Naive thymus-derived CD4-positive, alpha-beta T cell (primary cell): ENCODE measurements at regions of chr12 and their contacts with region 1.

Region 1: DNA sequence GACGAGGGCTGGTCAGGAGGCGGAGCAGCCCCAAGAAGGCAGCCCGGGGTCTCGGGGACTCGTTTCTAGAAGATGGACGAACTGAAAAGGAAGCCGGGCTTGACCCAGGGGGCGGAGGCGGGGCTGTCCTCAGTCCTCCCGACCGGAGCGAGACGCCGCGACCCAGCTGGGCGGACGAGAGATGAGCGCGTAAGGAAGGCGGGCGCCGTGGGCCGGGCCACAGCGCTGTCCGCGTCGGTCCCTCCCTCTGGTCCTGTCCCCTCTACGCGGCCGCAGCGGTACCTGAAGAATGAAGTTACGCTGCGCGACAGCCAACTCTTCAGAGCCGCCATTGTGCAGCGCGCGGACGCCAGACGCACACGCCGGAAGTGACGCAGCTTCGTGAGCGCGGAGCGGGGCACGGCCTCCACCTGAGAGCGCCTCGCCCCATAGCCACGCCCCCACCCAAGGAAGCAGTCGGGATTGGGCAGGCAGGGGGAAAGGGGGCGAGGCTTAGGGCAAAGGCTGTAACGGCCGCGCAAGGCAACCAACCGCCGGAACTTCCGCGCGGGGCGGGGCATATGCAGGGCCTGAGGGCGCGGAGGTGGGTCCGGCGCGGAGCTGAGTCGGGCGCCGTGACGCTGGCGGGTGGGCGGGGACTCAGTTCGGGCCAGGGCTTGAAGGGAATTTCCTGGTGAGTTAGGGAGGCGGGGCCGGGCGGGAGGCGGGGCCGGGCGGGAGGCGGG is at the start of gene DIABLO:
- DNase-seq: peak; percentile 97 to 100 (median 100)
- ATAC-seq: peak; percentile 96
- H3K4me3 ChIP-seq: peak within 1 kb of the TSS; percentile 90
- H3K4me3 Mint-ChIP-seq: peak within 1 kb of the TSS; percentile 75 to 95 (median 90)
- H3K27ac ChIP-seq: peak within 1 kb of the TSS; percentile 99
- H3K27ac Mint-ChIP-seq: peak within 1 kb of the TSS; percentile 76 to 96 (median 93)
- H3K4me1 ChIP-seq: peaks cover 24 to 34% of the 10 kb centered on the region in 2 donors
- H3K4me1 Mint-ChIP-seq: peaks cover 23 to 53% (median 47%) of the 10 kb centered on the region in 7 donors
- H3K27me3 ChIP-seq: no peaks in the 10 kb centered on the region
- H3K27me3 Mint-ChIP-seq: no peaks in the 10 kb centered on the region
- total RNA-seq, gene DIABLO: 41.3 to 94.1 (median 50.1) TPM

Region 2: GRCh38 chr12:121399391-121400331 is 826.2 kb before region 1 on chr12 and contains the start of gene RNF34:
- CTCF ChIA-PET with region 1: no interaction called
- POLR2A ChIA-PET with region 1: interaction called, 5 read pairs
- intact Hi-C with region 1: loop called in 1 of 2 experiments (anchors 2 kb)
- DNase-seq: peak; percentile 88 to 98 (median 97)
- ATAC-seq: peak; percentile 96
- H3K4me3 ChIP-seq: peak within 1 kb of the TSS; percentile 93
- H3K4me3 Mint-ChIP-seq: peak within 1 kb of the TSS; percentile 89 to 99 (median 94)
- H3K27ac ChIP-seq: peak within 1 kb of the TSS; percentile 91
- H3K27ac Mint-ChIP-seq: peak within 1 kb of the TSS; percentile 91 to 97 (median 94)
- H3K4me1 ChIP-seq: peaks cover 20 to 26% of the 10 kb centered on the region in 2 donors
- H3K4me1 Mint-ChIP-seq: peaks cover 29 to 52% (median 39%) of the 10 kb centered on the region in 7 donors
- H3K27me3 ChIP-seq: no peaks in the 10 kb centered on the region
- H3K27me3 Mint-ChIP-seq: no peaks in the 10 kb centered on the region
- total RNA-seq, gene RNF34: 61.1 to 98.4 (median 81.7) TPM

Region 3: DNA sequence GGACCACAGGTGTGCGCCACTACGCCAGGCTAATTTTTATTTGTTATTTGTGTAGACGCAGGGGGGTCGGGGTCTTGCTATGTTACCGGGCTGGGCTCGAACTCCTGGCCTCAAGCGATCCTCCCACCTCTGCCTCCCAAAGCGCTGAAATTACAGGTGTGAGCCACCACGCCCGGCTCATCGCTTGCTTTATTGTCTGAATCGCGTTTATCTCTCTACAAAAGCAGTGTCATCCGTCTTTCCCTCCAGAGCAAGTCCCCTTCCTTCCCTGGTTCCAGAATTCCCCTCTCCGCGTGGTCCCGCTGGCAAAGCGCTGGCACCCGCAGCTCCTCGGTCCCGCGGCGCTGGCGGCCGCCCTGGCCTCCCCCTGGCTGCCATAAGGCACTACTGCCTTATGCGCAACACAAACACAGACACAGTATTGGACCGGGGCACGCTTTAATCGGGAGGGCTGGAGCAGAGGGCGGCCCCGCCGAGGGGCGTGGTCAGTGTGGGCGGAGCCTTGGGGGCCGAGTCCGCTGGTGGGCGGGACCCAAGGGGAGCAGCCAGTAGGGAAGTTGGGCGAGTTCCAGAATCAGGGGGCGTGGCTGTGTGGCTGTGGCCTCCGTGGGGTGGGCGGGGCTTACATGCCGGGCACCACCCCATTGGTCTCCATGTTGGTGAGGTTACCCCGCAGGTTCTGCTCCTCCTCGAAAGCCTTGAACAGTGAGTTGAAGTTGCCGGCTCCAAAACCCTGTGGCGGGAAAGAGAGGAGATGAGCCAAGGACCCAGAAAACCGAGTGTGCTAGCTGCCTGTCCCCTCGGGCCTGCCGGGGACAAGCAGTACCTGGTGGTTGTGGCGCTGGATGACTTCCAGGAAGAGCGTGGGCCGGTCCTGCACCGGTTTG is 386.5 kb before region 1 on chr12:
- CTCF ChIA-PET with region 1: no interaction called
- POLR2A ChIA-PET with region 1: no interaction called
- intact Hi-C with region 1: loop called (anchors 1 kb)
- DNase-seq: peak; percentile 98 to 100 (median 99)
- ATAC-seq: peak; percentile 100
- H3K4me3 ChIP-seq: peak overlapping the region; percentile 91
- H3K4me3 Mint-ChIP-seq: peak overlapping the region; percentile 96 to 100 (median 98)
- H3K27ac ChIP-seq: peak overlapping the region; percentile 58
- H3K27ac Mint-ChIP-seq: peak overlapping the region; percentile 87 to 96 (median 92)
- H3K4me1 ChIP-seq: peaks cover 8 to 13% of the 10 kb centered on the region in 2 donors
- H3K4me1 Mint-ChIP-seq: peaks cover 12 to 27% (median 18%) of the 10 kb centered on the region in 7 donors
- H3K27me3 ChIP-seq: no peaks in the 10 kb centered on the region
- H3K27me3 Mint-ChIP-seq: no peaks in the 10 kb centered on the region

Region 4: DNA sequence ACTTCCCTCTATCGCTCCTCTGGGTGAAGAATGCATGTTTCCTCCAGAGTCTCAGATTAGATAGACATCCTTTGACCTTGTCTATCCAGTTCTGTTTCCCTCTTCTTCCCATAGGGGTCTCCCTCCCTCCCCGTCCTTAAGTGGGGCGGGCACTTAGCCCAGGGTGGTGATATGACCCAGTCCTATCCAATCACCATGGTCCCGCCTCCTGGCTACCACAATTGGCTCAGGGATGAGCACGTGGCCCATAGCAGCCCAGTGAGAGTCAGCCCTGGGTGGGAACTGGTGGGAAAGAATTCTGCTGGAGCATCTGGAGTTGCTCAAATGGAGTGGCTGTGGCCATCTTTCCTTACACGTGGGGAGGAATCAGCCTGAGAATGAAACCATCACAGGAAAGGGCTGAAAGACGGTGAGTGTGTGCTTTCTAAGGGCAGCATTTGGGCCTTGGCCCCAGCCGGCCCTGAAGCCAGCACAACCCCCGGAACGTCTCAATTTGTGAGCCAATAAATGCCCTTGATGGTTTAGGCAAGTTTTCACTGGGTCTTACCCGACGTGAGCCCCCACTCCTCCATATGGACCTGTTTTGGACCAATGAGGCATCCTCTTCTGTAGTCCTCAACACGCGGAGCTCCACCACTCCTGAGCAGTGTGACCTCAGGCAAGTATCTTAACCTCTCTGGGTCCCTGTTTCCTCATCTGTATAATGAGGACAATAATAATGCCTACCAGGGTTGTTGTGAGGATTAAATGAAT is 161.6 kb before region 1 on chr12:
- CTCF ChIA-PET with region 1: no interaction called
- POLR2A ChIA-PET with region 1: no interaction called
- intact Hi-C with region 1: no loop called
- DNase-seq: peak in 4 of 9 donors; percentile 13 to 37 (median 29)
- ATAC-seq: peak; percentile 80
- H3K4me3 ChIP-seq: no peak overlapping the region
- H3K4me3 Mint-ChIP-seq: no peak overlapping the region
- H3K27ac ChIP-seq: no peak overlapping the region
- H3K27ac Mint-ChIP-seq: peak overlapping the region in 2 of 9 donors; percentile 18 to 83
- H3K4me1 ChIP-seq: peaks cover 11 to 12% of the 10 kb centered on the region in 2 donors
- H3K4me1 Mint-ChIP-seq: peaks cover 19 to 29% (median 24%) of the 10 kb centered on the region in 7 donors
- H3K27me3 ChIP-seq: no peaks in the 10 kb centered on the region
- H3K27me3 Mint-ChIP-seq: peaks cover 0 to 1% (median 0%) of the 10 kb centered on the region in 5 donors

Region 5: DNA sequence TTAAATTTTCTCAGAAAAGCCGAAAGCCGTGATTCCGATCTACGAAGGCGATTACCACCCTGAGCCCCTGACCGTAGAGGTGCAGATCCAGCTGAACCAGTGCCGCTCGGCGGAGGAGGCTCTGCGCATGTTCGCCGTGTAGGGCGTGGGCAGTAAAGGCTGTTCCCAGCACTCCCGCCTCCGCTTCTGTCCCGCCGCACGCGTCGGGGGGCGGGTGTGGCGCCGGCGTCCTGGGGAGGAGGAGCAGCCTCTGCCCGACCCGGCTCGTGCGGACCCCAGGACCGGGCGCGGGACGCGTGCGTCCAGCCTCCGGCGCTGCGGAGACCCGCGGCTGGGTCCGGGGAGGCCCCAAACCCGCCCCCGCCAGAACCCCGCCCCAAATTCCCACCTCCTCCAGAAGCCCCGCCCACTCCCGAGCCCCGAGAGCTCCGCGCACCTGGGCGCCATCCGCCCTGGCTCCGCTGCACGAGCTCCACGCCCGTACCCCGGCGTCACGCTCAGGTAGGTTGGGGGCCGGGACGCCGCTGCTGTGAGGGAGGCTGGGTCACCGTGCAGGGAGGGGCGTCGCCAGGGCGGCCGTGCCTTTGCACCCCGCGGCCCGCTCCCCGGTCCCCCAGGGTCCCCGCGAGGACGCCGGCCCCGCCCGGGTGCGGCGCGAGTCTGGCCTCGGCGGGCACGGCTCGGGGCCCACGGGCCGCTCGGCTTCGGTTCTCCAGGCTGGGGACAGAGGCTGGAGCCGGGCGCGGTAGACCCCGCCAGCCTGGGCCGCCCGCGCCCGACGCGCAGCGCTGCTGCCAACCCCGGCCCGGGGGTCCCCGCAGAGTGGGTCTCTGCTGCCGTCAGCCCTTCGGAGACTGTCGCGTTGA is 22.3 kb before region 1 on chr12 and contains the start of gene B3GNT4:
- CTCF ChIA-PET with region 1: no interaction called
- POLR2A ChIA-PET with region 1: interaction called, 6 read pairs
- intact Hi-C with region 1: loop called in 1 of 2 experiments (anchors 1 kb)
- DNase-seq: peak; percentile 50 to 75 (median 67)
- ATAC-seq: peak; percentile 79
- H3K4me3 ChIP-seq: peak within 1 kb of the TSS; percentile 68
- H3K4me3 Mint-ChIP-seq: peak within 1 kb of the TSS; percentile 79 to 87 (median 82)
- H3K27ac ChIP-seq: no peak within 1 kb of the TSS
- H3K27ac Mint-ChIP-seq: peak within 1 kb of the TSS in 5 of 9 donors; percentile 44 to 77 (median 46)
- H3K4me1 ChIP-seq: peaks cover 6 to 10% of the 10 kb centered on the region in 2 donors
- H3K4me1 Mint-ChIP-seq: peaks cover 5 to 17% (median 14%) of the 10 kb centered on the region in 7 donors
- H3K27me3 ChIP-seq: peaks cover 0 to 3% of the 10 kb centered on the region in 2 donors
- H3K27me3 Mint-ChIP-seq: peaks cover 0 to 35% (median 0%) of the 10 kb centered on the region in 5 donors
- total RNA-seq, gene B3GNT4: 0.54 to 1.1 (median 0.70) TPM in 3 of 5 experiments, not detected in the others

Region 6: DNA sequence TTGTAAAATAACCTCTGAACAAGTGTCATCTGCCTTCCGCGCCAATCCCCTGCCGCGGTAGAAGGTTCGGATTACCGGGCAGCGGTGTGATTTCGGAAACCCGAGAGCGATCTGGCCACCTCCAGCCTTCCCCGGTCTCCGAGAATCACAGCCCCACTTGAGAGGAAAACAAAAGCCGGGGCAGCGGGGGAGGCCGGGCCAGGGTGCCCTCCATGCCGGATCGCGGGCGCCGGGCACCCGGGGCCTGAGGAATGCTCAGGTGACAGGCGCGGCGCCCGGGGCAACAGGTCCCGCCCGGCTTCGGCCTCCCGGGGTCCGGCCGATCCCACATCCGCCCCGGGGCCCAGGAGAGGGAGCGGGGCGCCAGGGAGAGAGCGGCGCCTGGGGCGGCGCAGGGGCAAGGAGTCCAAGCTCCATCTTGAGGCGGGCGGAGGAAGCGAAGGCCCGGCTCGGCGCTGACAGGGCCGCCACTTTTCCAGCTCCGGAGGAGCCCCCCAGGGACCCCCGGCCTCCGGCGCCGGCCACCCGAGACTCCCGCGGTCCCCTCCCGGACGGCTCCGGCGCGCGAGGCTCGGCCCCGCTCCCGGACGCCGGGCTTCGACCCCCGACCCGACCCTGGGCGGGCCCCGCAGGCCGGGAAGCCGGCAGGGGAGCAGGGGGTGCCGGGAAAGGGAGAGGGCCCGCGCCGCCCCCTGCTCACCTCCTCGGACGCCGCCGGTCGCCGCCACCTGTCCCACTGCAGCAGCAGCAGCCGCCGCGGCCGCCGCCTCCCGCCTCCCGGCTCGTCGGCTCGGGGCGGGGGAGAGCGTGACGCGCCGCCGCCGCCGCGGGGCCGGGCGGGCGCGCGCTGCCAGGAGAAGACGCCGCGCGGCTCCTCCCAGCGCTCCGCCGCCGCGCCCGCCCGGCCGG is 196.2 kb after region 1 on chr12 and contains the start of gene CLIP1:
- CTCF ChIA-PET with region 1: no interaction called
- POLR2A ChIA-PET with region 1: no interaction called
- intact Hi-C with region 1: loop called in 1 of 2 experiments (anchors 1 kb)
- DNase-seq: peak; percentile 40 to 73 (median 57)
- ATAC-seq: peak; percentile 84
- H3K4me3 ChIP-seq: peak within 1 kb of the TSS; percentile 71
- H3K4me3 Mint-ChIP-seq: peak within 1 kb of the TSS; percentile 91 to 97 (median 92)
- H3K27ac ChIP-seq: peak within 1 kb of the TSS; percentile 90
- H3K27ac Mint-ChIP-seq: peak within 1 kb of the TSS; percentile 83 to 93 (median 91)
- H3K4me1 ChIP-seq: peaks cover 17 to 20% of the 10 kb centered on the region in 2 donors
- H3K4me1 Mint-ChIP-seq: peaks cover 23 to 39% (median 35%) of the 10 kb centered on the region in 7 donors
- H3K27me3 ChIP-seq: no peaks in the 10 kb centered on the region
- H3K27me3 Mint-ChIP-seq: no peaks in the 10 kb centered on the region
- total RNA-seq, gene CLIP1: 54.7 to 89.3 (median 65.1) TPM

Region 7: GRCh38 chr12:122752464-122753318 is 526.8 kb after region 1 on chr12 and contains the start of gene DENR:
- CTCF ChIA-PET with region 1: no interaction called
- POLR2A ChIA-PET with region 1: no interaction called
- intact Hi-C with region 1: loop called (anchors 1 kb)
- DNase-seq: peak; percentile 98 to 100 (median 99)
- ATAC-seq: peak; percentile 99
- H3K4me3 ChIP-seq: peak within 1 kb of the TSS; percentile 87
- H3K4me3 Mint-ChIP-seq: peak within 1 kb of the TSS; percentile 93 to 100 (median 96)
- H3K27ac ChIP-seq: peak within 1 kb of the TSS; percentile 94
- H3K27ac Mint-ChIP-seq: peak within 1 kb of the TSS; percentile 89 to 98 (median 96)
- H3K4me1 ChIP-seq: peaks cover 12 to 19% of the 10 kb centered on the region in 2 donors
- H3K4me1 Mint-ChIP-seq: peaks cover 31 to 70% (median 60%) of the 10 kb centered on the region in 7 donors
- H3K27me3 ChIP-seq: no peaks in the 10 kb centered on the region
- H3K27me3 Mint-ChIP-seq: no peaks in the 10 kb centered on the region
- total RNA-seq, gene DENR: 29.5 to 65.5 (median 46.1) TPM